ENCODE measurements at regions of chr5 and their contacts with region 1.

Region 1: GRCh38 chr5:116574367-116575325 is at the start of gene SEMA6A:
- DNase-seq: peak; percentile 74
- H3K4me3 Mint-ChIP-seq: peak within 1 kb of the TSS; percentile 76
- H3K27ac Mint-ChIP-seq: no peak within 1 kb of the TSS
- H3K4me1 Mint-ChIP-seq: peaks cover 24% of the 10 kb centered on the region
- H3K27me3 Mint-ChIP-seq: peaks cover 78% of the 10 kb centered on the region
- total RNA-seq, gene SEMA6A: 0.10 to 0.14 TPM

Region 2: GRCh38 chr5:116084871-116085715 is 489.6 kb before region 1 on chr5 and contains the start of gene COMMD10:
- CTCF ChIA-PET with region 1: no interaction called
- intact Hi-C with region 1: loop called (anchors 2 kb)
- DNase-seq: peak; percentile 81
- H3K4me3 Mint-ChIP-seq: peak within 1 kb of the TSS; percentile 91
- H3K27ac Mint-ChIP-seq: peak within 1 kb of the TSS; percentile 97
- H3K4me1 Mint-ChIP-seq: peaks cover 45% of the 10 kb centered on the region
- H3K27me3 Mint-ChIP-seq: no peaks in the 10 kb centered on the region
- total RNA-seq, gene COMMD10: 30.0 to 30.9 TPM

Region 3: GRCh38 chr5:116137544-116138378 is 436.9 kb before region 1 on chr5:
- CTCF ChIA-PET with region 1: interaction called, 3 read pairs
- intact Hi-C with region 1: loop called (anchors 5 kb)
- DNase-seq: no peak
- H3K4me3 Mint-ChIP-seq: no peak overlapping the region
- H3K27ac Mint-ChIP-seq: no peak overlapping the region
- H3K4me1 Mint-ChIP-seq: peaks cover 22% of the 10 kb centered on the region
- H3K27me3 Mint-ChIP-seq: no peaks in the 10 kb centered on the region

Region 4: DNA sequence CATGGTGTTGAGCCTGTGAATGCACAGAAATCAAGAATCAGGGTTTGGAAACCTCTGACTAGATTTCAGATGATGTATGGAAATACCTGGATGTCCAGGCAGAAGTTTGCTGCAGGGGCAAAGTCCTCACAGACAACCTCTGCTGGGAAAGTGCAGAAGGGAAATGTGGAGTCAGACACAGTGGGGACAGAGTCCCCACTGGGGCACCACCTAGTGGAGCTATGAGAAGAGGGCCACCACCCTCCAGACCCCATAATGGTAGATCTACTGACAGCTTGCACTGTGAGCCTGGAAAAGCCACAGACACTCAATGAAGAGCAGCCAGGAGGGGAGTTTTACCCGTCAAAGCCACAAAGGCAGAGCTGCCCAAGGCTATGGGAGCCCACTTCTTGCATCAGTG is 181.9 kb after region 1 on chr5:
- CTCF ChIA-PET with region 1: no interaction called
- intact Hi-C with region 1: loop called (anchors 1 kb)
- DNase-seq: no peak
- H3K4me3 Mint-ChIP-seq: no peak overlapping the region
- H3K27ac Mint-ChIP-seq: no peak overlapping the region
- H3K4me1 Mint-ChIP-seq: no peaks in the 10 kb centered on the region
- H3K27me3 Mint-ChIP-seq: peaks cover 7% of the 10 kb centered on the region

Region 5: GRCh38 chr5:116947691-116948528 is 373.3 kb after region 1 on chr5:
- CTCF ChIA-PET with region 1: interaction called, 3 read pairs
- intact Hi-C with region 1: loop called (anchors 1 kb)
- DNase-seq: peak; percentile 79
- H3K4me3 Mint-ChIP-seq: no peak overlapping the region
- H3K27ac Mint-ChIP-seq: no peak overlapping the region
- H3K4me1 Mint-ChIP-seq: no peaks in the 10 kb centered on the region
- H3K27me3 Mint-ChIP-seq: peaks cover 2% of the 10 kb centered on the region

Region 6: DNA sequence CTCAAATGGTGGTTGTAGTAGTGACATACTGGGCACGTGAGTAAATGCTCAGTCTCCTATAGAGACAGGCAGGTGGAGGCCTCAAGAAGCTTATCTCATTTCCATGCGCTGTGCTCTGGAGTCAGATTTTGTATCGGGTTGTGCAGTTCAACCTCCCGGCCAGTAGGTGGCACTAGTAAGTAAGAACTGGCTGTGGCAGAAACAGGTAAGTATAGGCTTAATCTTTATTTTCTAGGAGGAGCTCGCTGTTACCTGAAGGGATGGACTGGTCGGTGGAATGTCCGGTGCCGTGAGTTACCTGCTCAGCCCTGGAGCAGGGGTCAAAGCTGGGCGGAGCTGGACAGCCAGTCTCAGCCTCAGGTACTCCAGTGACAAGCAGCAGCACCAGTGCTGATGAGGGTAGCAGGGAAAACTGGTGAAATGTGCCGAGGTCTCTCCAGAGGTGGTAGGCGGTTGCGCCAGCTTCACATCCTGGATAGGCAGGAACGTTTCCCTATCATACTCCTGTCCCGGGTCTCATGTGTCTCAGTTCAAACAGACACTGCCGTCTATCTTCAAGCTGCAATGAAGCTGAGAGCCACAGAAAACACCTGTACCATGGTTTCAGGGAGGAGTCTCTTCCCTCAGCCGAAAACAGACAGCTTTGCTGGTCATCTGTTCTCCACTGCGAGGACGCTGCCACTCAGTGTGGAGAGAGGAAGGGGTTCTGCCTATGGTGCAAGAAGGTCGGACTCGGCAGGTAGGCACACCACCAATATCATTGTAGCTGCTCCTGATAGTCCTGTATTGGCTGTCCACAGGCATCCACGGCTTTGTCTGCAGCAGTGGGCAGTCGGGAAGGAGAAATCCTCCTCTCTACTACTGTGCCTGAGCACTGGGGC is 880.3 kb after region 1 on chr5:
- CTCF ChIA-PET with region 1: no interaction called
- intact Hi-C with region 1: loop called (anchors 10 kb)
- DNase-seq: peak; percentile 66
- H3K4me3 Mint-ChIP-seq: peak overlapping the region; percentile 49
- H3K27ac Mint-ChIP-seq: no peak overlapping the region
- H3K4me1 Mint-ChIP-seq: no peaks in the 10 kb centered on the region
- H3K27me3 Mint-ChIP-seq: peaks cover 2% of the 10 kb centered on the region

Measured in activated naive CD4-positive, alpha-beta T cell treated with anti-CD3 and anti-CD28 coated beads for 36 hours (primary cell).